Activated CD4-positive, alpha-beta memory T cell treated with anti-CD3 and anti-CD28 coated beads for 36 hours (primary cell): ENCODE measurements at regions of chr20 and their contacts with region 1.

Region 1: GRCh38 chr20:56439771-56440291 is 27.8 kb downstream of the CASS4 start:
- DNase-seq: peak; percentile 41
- H3K4me3 Mint-ChIP-seq: peak overlapping the region; percentile 48
- H3K27ac Mint-ChIP-seq: peak overlapping the region; percentile 90
- H3K4me1 Mint-ChIP-seq: peaks cover 48% of the 10 kb centered on the region
- H3K27me3 Mint-ChIP-seq: no peaks in the 10 kb centered on the region

Region 2: GRCh38 chr20:56422076-56422823 is 17.6 kb before region 1 on chr20:
- CTCF ChIA-PET with region 1: interaction called, 4 read pairs
- POLR2A ChIA-PET with region 1: interaction called, 4 read pairs
- intact Hi-C with region 1: loop called (anchors 1 kb)
- DNase-seq: no peak
- H3K4me3 Mint-ChIP-seq: peak overlapping the region; percentile 6
- H3K27ac Mint-ChIP-seq: peak overlapping the region; percentile 73
- H3K4me1 Mint-ChIP-seq: peaks cover 75% of the 10 kb centered on the region
- H3K27me3 Mint-ChIP-seq: no peaks in the 10 kb centered on the region

Region 3: DNA sequence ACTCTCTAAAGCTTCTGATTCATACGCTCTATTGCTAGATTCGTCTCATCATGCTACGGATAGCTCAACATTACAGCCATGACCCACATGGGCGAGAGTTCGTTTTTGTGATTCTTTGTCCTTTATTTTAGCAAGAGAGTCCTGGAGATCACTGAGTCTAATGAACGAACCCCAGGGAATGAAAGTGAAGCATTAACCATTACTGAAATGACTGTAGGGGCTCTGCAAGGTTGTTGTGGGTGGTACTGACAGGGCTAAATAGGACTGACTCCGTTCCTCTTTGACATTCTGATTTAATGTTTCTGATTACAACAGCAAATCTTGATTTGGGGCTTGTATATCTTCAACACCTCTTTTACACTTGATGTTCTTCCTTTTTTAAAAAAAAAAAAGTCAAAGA is 14.9 kb after region 1 on chr20:
- CTCF ChIA-PET with region 1: no interaction called
- POLR2A ChIA-PET with region 1: interaction called, 7 read pairs
- intact Hi-C with region 1: loop called (anchors 2 kb)
- DNase-seq: peak; percentile 42
- H3K4me3 Mint-ChIP-seq: no peak overlapping the region
- H3K27ac Mint-ChIP-seq: peak overlapping the region; percentile 81
- H3K4me1 Mint-ChIP-seq: peaks cover 37% of the 10 kb centered on the region
- H3K27me3 Mint-ChIP-seq: no peaks in the 10 kb centered on the region

Region 4: GRCh38 chr20:56460459-56460858 is 20.6 kb after region 1 on chr20:
- CTCF ChIA-PET with region 1: interaction called, 3 read pairs
- POLR2A ChIA-PET with region 1: no interaction called
- intact Hi-C with region 1: loop called (anchors 1 kb)
- DNase-seq: peak; percentile 56
- H3K4me3 Mint-ChIP-seq: no peak overlapping the region
- H3K27ac Mint-ChIP-seq: peak overlapping the region; percentile 70
- H3K4me1 Mint-ChIP-seq: peaks cover 41% of the 10 kb centered on the region
- H3K27me3 Mint-ChIP-seq: no peaks in the 10 kb centered on the region